ENCODE measurements at regions of chr5 and their contacts with region 1.

Region 1: DNA sequence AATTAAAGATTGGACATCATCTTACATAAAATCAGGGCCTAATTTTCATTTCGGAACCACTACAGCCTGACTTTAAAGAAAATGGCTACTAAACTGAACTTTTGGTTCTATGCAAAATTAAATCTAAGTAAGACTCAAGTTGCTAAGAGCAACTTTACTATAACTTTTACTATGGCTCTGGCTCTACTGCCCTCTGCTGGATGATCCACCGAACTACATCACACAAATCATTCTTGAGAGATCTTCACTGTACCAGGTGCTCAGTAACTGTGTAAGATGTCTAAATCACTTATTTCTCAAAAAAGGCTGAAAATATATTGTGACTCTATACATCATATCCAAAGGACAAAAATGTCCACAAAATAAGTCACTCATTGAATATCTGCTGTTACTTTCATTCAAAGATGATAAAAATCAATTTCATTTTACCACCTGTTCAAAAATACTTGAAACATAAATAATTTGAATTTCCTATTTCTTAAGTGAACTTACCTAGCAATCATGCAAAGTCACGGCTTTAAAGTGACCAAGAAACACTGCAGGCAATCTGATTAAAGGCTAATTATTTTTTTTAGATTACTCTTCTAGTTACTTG is 13.5 kb downstream of the MOCS2 start:
- DNase-seq: peak in 1 of 2 donors; percentile 83
- H3K4me3 ChIP-seq: no peak overlapping the region
- H3K27ac ChIP-seq: no peak overlapping the region
- H3K4me1 ChIP-seq: peaks cover 0 to under 1% of the 10 kb centered on the region in 2 donors
- H3K27me3 ChIP-seq: no peaks in the 10 kb centered on the region
- CTCF ChIP-seq: peak; percentile 73 to 86 (median 81)

Region 2: DNA sequence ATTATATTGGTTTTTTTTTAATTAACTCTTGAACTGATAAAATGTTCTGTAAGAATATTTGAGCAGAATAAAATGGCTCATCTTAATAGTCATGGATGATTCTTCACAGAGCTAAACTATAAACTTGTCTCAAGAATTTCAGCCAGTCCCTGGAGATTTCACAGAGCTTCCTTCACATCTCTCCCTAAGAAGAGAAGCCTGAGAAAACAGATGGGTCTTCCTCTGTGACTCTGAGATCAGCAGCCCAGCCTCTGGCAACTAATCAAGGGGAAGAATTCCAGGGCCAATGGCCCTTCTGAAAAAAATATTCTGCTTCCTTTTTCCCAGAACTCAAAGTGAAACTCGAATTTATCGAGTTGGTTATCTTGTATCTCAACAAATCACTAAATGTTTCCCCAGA is 430.5 kb before region 1 on chr5:
- intact Hi-C with region 1: loop called (anchors 10 kb)
- DNase-seq: no peak
- H3K4me3 ChIP-seq: no peak overlapping the region
- H3K27ac ChIP-seq: no peak overlapping the region
- H3K4me1 ChIP-seq: no peaks in the 10 kb centered on the region
- H3K27me3 ChIP-seq: no peaks in the 10 kb centered on the region
- CTCF ChIP-seq: no peak

Region 3: GRCh38 chr5:52693280-52693679 is 402.7 kb before region 1 on chr5:
- intact Hi-C with region 1: loop called (anchors 10 kb)
- DNase-seq: no peak
- H3K4me3 ChIP-seq: no peak overlapping the region
- H3K27ac ChIP-seq: no peak overlapping the region
- H3K4me1 ChIP-seq: peaks cover 0 to 29% of the 10 kb centered on the region in 2 donors
- H3K27me3 ChIP-seq: no peaks in the 10 kb centered on the region
- CTCF ChIP-seq: peak; percentile 41 to 67 (median 54)

Region 4: GRCh38 chr5:52948418-52949076 is 147.5 kb before region 1 on chr5:
- intact Hi-C with region 1: loop called (anchors 1 kb)
- DNase-seq: peak in 1 of 2 donors; percentile 69
- H3K4me3 ChIP-seq: no peak overlapping the region
- H3K27ac ChIP-seq: peak overlapping the region in 1 of 2 donors; percentile 33
- H3K4me1 ChIP-seq: peaks cover 0 to 2% of the 10 kb centered on the region in 2 donors
- H3K27me3 ChIP-seq: no peaks in the 10 kb centered on the region
- CTCF ChIP-seq: peak; percentile 57 to 71 (median 66)

Region 5: GRCh38 chr5:53063176-53063575 is 32.9 kb before region 1 on chr5:
- intact Hi-C with region 1: no loop called
- DNase-seq: no peak
- H3K4me3 ChIP-seq: no peak overlapping the region
- H3K27ac ChIP-seq: no peak overlapping the region
- H3K4me1 ChIP-seq: no peaks in the 10 kb centered on the region
- H3K27me3 ChIP-seq: no peaks in the 10 kb centered on the region
- CTCF ChIP-seq: no peak

Region 6: DNA sequence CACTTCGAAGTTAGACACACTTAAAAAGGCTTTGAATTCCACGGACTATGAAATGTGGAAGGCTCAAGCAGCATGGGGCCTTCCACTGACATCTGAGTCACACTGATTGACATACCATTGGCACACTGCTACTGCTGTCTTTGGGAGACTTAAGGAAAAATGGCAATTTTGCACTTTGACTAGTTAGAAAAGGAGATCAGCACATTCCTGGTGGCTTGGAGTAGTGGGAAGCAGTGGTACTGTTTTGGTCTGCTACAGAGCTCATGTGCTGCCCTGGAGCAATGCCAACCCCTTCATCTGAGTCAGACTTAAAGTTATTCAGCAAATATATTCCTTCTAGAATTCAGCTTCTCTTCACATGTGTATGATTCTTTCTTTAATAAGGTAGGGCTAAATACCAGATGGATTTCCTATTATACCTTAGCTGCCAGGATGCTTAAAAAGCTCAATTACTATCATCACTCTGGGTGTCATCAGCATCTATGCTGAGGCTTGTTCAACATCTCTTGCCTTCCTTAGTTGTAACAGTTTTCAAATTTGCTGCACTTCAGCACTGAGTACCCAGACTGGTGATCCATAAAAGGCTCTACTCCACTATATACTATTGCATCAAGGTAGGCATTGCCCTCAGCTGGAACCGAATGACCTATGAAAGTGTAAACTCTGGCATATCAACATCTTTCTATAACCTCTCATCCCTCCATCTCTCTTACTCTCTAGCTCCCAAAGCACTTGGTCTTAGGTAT is 55.9 kb after region 1 on chr5:
- intact Hi-C with region 1: no loop called
- DNase-seq: peak in 1 of 2 donors; percentile 69
- H3K4me3 ChIP-seq: no peak overlapping the region
- H3K27ac ChIP-seq: no peak overlapping the region
- H3K4me1 ChIP-seq: peaks cover 0 to 2% of the 10 kb centered on the region in 2 donors
- H3K27me3 ChIP-seq: no peaks in the 10 kb centered on the region
- CTCF ChIP-seq: no peak

Measured in ascending aorta (tissue), 2 donors.